Stomach (tissue), 19 donors: ENCODE measurements at regions of chr7 and their contacts with region 1.

Region 1: GRCh38 chr7:74417419-74417971 is 36.2 kb upstream of the GTF2IRD1 start:
- DNase-seq: peak; percentile 69 to 86
- H3K4me3 ChIP-seq: no peak overlapping the region
- H3K27ac ChIP-seq: no peak overlapping the region
- H3K4me1 ChIP-seq: peaks cover 0 to 8% (median 4%) of the 10 kb centered on the region in 4 donors
- H3K27me3 ChIP-seq: no peaks in the 10 kb centered on the region
- CTCF ChIP-seq: peak in 5 of 7 experiments; percentile 93 to 96 (median 94)
- EP300 ChIP-seq: no peak
- POLR2A ChIP-seq: no peak

Region 2: GRCh38 chr7:74569501-74570075 is 152.1 kb after region 1 on chr7:
- intact Hi-C with region 1: loop called (anchors 5 kb)
- DNase-seq: no peak
- H3K4me3 ChIP-seq: no peak overlapping the region
- H3K27ac ChIP-seq: no peak overlapping the region
- H3K4me1 ChIP-seq: peaks cover 0 to 9% (median 0%) of the 10 kb centered on the region in 4 donors
- H3K27me3 ChIP-seq: no peaks in the 10 kb centered on the region
- CTCF ChIP-seq: no peak
- EP300 ChIP-seq: no peak
- POLR2A ChIP-seq: no peak